ENCODE measurements at regions of chr3 and their contacts with region 1.

Region 1: DNA sequence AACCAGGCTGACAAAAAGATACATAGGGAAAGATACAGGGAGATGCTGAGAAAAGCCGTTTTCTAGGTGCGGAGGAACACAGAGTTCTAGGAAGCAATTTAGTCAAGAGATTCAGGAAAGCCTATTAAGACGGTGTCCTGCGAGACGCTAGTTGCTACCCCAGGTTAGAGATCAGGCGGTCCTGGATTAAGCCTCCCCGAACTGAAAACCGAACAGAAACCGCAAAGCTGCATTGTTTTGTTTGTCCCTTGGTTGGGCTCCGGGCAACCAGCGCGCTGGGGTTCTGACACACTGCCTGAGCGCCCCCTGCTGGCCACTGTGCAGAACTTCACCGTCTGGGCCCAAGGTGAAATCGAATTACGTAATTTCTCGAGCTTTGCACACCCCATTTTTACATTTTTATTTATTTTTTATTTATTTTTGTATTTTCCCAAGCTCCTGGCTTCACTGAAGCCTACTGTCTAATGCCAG is 37.3 kb upstream of the NDUFB4 start:
- DNase-seq: peak; percentile 90 to 92
- ATAC-seq: peak; percentile 85 to 91 (median 88)
- H3K4me3 ChIP-seq: peak overlapping the region; percentile 56
- H3K27ac ChIP-seq: peak overlapping the region; percentile 63
- H3K4me1 ChIP-seq: peaks cover 12% of the 10 kb centered on the region
- H3K27me3 ChIP-seq: no peaks in the 10 kb centered on the region
- CTCF ChIP-seq: peak; percentile 99

Region 2: DNA sequence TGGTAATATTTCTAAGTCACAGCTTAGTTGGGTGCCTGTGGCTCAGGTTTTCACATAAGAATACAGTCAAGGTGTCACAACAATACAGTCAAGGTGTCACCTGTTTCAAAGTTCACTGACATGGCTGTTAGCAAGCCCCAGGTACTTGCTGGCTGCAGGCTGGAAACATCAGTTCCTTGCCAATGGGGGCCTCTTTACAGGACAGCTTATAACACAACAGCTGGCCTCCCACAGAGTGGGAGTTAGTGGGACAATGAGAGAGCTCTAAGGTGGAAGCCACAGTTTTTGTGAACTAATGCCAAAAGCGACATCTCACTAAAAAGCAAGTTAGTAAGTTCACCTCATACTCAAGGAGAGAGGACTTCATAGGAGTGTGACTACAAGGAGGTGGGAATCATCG is 319.2 kb before region 1 on chr3:
- intact Hi-C with region 1: loop called (anchors 2 to 5 kb)
- DNase-seq: no peak
- ATAC-seq: no peak
- H3K4me3 ChIP-seq: no peak overlapping the region
- H3K27ac ChIP-seq: no peak overlapping the region
- H3K4me1 ChIP-seq: no peaks in the 10 kb centered on the region
- H3K27me3 ChIP-seq: no peaks in the 10 kb centered on the region
- CTCF ChIP-seq: no peak

Region 3: DNA sequence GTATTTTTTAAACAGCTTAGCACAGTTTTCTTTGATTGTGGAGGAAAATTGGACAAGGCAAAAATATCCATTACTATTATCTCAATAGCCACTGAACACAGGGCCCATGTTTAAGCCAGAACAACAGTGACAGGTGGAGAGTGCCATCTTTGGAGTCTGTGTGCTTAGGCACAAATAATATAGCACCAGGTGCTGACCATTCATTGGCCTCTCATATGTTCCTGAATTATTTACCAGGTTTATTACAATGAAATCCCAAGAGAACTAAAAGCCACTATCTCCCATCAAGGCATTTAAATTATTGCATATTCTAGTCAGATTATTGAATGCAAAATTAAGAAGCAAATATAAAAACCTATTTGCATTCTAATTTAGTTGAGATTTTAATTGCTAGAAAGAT is 313.4 kb before region 1 on chr3:
- intact Hi-C with region 1: loop called (anchors 2 to 5 kb)
- DNase-seq: no peak
- ATAC-seq: no peak
- H3K4me3 ChIP-seq: no peak overlapping the region
- H3K27ac ChIP-seq: no peak overlapping the region
- H3K4me1 ChIP-seq: no peaks in the 10 kb centered on the region
- H3K27me3 ChIP-seq: no peaks in the 10 kb centered on the region
- CTCF ChIP-seq: no peak

Region 4: DNA sequence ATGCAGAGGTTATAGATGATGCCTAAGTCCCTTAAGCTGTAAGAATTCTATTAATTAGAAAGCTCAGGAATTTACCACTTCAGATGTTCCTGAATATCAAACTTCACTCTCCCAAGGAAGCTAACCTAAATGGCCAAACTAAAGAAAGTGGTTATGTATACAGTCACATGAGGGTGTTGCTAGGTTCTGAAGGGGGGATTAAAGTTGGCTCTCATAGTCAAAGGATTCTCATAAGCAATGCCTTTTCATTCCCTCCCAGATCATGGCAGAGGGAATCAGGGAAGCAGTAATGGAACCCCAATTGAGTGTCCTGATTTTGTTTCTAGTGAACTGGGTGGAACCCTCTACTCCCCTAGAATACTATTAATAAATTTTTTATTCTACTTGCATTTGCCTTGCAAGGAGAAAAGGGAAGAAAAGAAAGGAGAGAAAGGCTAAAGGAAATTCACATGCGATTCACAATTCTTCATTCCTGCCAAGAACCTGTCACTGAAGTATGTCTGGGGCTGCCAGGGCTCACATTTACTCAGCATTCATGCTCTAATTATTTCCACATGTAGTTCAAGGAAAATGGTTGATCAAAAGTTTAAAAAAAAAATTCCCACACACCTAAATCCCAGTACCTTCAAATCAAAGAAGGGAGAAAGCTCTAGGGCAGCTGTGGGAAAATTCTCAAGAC is 133.1 kb before region 1 on chr3:
- intact Hi-C with region 1: loop called in 1 of 2 experiments (anchors 5 kb)
- DNase-seq: peak in 1 of 2 donors; percentile 38
- ATAC-seq: peak in 2 of 4 donors; percentile 43 to 67
- H3K4me3 ChIP-seq: no peak overlapping the region
- H3K27ac ChIP-seq: no peak overlapping the region
- H3K4me1 ChIP-seq: no peaks in the 10 kb centered on the region
- H3K27me3 ChIP-seq: no peaks in the 10 kb centered on the region
- CTCF ChIP-seq: no peak

Region 5: DNA sequence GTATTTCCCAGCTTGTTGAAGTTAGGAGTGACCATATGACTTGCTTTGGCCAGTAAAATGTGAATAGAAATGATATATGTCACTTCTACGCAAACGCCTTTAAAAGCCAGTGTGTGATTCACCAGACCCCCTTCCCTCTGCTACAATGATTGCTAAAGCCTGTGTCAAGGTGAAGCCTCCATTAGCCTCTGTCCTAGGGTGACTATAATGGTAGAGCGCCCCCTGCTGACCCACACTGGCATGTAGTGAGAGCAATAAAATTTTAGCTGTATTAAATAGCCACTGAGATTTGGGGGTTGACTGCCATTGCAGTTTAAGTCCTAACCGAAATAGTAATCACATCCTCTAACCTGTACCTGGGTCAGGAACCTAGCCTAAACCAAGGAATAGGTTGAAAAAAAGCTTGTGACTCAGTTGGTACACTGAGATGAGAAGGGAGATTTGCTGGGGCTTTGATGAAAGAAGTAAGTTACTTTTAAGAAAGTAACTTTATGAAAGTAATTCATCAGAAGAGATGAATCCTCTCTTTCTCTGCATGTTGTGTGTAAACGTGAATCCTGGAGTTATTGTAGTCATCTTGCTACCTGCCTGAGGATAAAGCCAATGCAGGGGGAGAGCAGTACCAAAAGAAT is 236.3 kb after region 1 on chr3:
- intact Hi-C with region 1: loop called (anchors 2 kb)
- DNase-seq: peak; percentile 74 to 82
- ATAC-seq: peak; percentile 77 to 96 (median 93)
- H3K4me3 ChIP-seq: no peak overlapping the region
- H3K27ac ChIP-seq: no peak overlapping the region
- H3K4me1 ChIP-seq: no peaks in the 10 kb centered on the region
- H3K27me3 ChIP-seq: no peaks in the 10 kb centered on the region
- CTCF ChIP-seq: peak; percentile 69

Measured in psoas muscle (tissue), 8 donors.